Activated CD4-positive, alpha-beta T cell treated with anti-CD3 and anti-CD28 coated beads for 36 hours (primary cell): ENCODE measurements at regions of chr1 and their contacts with region 1.

Region 1: GRCh38 chr1:155193275-155193990 is 14.3 kb downstream of the THBS3 start:
- DNase-seq: peak; percentile 89
- ATAC-seq: peak; percentile 62
- H3K4me3 Mint-ChIP-seq: peak overlapping the region; percentile 94
- H3K27ac Mint-ChIP-seq: peak overlapping the region; percentile 96
- H3K4me1 Mint-ChIP-seq: peaks cover 31% of the 10 kb centered on the region
- H3K27me3 Mint-ChIP-seq: no peaks in the 10 kb centered on the region

Region 2: DNA sequence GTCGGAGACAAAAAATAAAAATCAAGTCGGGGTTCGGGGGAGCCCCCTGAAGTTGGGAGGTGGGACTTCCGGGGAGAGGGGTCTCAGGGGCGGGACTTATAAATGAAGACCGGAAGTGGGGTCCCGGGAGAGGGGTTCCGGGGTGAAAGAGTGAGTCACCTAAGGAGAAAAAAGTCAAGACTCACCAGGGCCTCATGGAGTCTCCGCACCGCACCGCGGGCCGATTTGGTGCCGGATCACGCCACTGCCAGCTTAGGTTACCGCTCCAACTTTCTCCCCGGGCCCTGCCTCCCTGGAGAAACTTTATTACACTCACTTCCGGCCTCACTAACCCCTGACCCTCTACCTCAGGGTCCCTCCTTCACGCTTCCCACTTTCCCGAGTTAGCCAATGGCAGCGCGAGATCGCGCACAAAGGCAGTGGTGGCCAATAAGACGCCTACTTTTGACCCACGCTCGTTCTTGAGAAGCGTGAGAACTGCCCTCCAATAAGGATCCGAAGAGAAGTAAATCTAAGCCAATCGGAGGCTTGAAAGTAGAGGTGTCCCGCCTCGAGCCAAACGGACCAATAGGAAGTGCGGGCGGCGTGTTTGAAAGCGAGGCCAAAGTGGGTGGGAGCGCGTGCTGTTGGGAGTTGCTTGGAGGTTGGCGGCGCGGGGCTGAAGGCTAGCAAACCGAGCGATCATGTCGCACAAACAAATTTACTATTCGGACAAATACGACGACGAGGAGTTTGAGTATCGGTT is 219.2 kb before region 1 on chr1 and contains the start of gene CKS1B:
- CTCF ChIA-PET with region 1: no interaction called
- POLR2A ChIA-PET with region 1: no interaction called
- intact Hi-C with region 1: loop called in 1 of 2 experiments (anchors 1 kb)
- DNase-seq: peak; percentile 98
- ATAC-seq: peak; percentile 86
- H3K4me3 Mint-ChIP-seq: no peak within 1 kb of the TSS
- H3K27ac Mint-ChIP-seq: no peak within 1 kb of the TSS
- H3K4me1 Mint-ChIP-seq: peaks cover 30% of the 10 kb centered on the region
- H3K27me3 Mint-ChIP-seq: no peaks in the 10 kb centered on the region
- total RNA-seq, gene CKS1B: 190 to 196 TPM

Region 3: GRCh38 chr1:155135415-155136028 is 57.9 kb before region 1 on chr1 and contains the start of gene SLC50A1:
- CTCF ChIA-PET with region 1: interaction called, 7 read pairs
- POLR2A ChIA-PET with region 1: no interaction called
- intact Hi-C with region 1: loop called in 1 of 2 experiments (anchors 1 kb)
- DNase-seq: peak; percentile 97
- ATAC-seq: peak; percentile 78
- H3K4me3 Mint-ChIP-seq: peak within 1 kb of the TSS; percentile 96
- H3K27ac Mint-ChIP-seq: peak within 1 kb of the TSS; percentile 97
- H3K4me1 Mint-ChIP-seq: peaks cover 35% of the 10 kb centered on the region
- H3K27me3 Mint-ChIP-seq: no peaks in the 10 kb centered on the region
- total RNA-seq, gene SLC50A1: 50.2 to 58.0 TPM

Region 4: GRCh38 chr1:155208541-155209311 is 15.3 kb after region 1 on chr1 and contains the start of gene MTX1:
- CTCF ChIA-PET with region 1: interaction called, 14 read pairs
- POLR2A ChIA-PET with region 1: interaction called, 5 read pairs
- intact Hi-C with region 1: loop called (anchors 1 to 2 kb)
- DNase-seq: peak; percentile 93
- ATAC-seq: peak; percentile 87
- H3K4me3 Mint-ChIP-seq: peak within 1 kb of the TSS; percentile 89
- H3K27ac Mint-ChIP-seq: peak within 1 kb of the TSS; percentile 86
- H3K4me1 Mint-ChIP-seq: peaks cover 29% of the 10 kb centered on the region
- H3K27me3 Mint-ChIP-seq: no peaks in the 10 kb centered on the region
- total RNA-seq, gene MTX1: 52.8 to 52.9 TPM

Region 5: GRCh38 chr1:155244368-155245162 is 51.1 kb after region 1 on chr1:
- CTCF ChIA-PET with region 1: interaction called, 10 read pairs
- POLR2A ChIA-PET with region 1: no interaction called
- intact Hi-C with region 1: loop called in 1 of 2 experiments (anchors 1 kb)
- DNase-seq: peak; percentile 98
- ATAC-seq: peak; percentile 96
- H3K4me3 Mint-ChIP-seq: peak overlapping the region; percentile 80
- H3K27ac Mint-ChIP-seq: peak overlapping the region; percentile 90
- H3K4me1 Mint-ChIP-seq: peaks cover 44% of the 10 kb centered on the region
- H3K27me3 Mint-ChIP-seq: peaks cover 2% of the 10 kb centered on the region